ENCODE measurements at regions of chr16 and their contacts with region 1.

Region 1: DNA sequence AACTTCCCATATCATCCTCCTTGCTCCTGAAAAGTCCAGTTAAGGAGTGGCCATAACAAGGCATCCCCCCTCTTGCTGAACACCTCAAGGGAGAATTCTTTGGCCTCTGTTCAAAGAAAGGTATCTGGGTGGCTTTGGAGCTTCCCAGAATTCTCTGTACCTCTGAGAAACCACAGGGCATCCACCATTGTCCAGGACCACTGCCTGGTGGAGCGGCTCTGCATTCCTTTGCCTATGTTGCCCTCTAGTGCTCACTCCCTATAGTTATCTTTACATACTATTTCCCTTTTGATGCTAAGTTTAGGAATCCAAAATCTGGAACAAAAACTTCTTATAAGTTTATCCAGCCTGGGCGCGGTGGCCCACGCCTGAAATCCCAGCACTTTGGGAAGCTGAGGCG is 30.3 kb downstream of the CHD9NB start:
- DNase-seq: no peak
- ATAC-seq: peak; percentile 82
- H3K4me3 ChIP-seq: no peak overlapping the region
- H3K27ac ChIP-seq: no peak overlapping the region
- H3K4me1 ChIP-seq: no peaks in the 10 kb centered on the region
- H3K27me3 ChIP-seq: no peaks in the 10 kb centered on the region
- CTCF ChIP-seq: peak; percentile 46 to 63 (median 46); a peak in 4 of 6 replicates
- EP300 ChIP-seq: no peak
- POLR2A ChIP-seq: no peak
- RAD21 ChIP-seq: peak; percentile 78

Region 2: GRCh38 chr16:52068447-52069074 is 953.8 kb before region 1 on chr16:
- CTCF ChIA-PET with region 1: interaction called, 8 read pairs
- POLR2A ChIA-PET with region 1: no interaction called
- RAD21 ChIA-PET with region 1: no interaction called
- SMC1A ChIA-PET with region 1: interaction called, 5 read pairs
- in situ Hi-C with region 1: no loop called
- intact Hi-C with region 1: loop called (anchors 2 kb)
- DNase-seq: no peak
- ATAC-seq: peak; percentile 46
- H3K4me3 ChIP-seq: no peak overlapping the region
- H3K27ac ChIP-seq: no peak overlapping the region
- H3K4me1 ChIP-seq: no peaks in the 10 kb centered on the region
- H3K27me3 ChIP-seq: no peaks in the 10 kb centered on the region
- CTCF ChIP-seq: peak in 1 of 3 experiments; percentile 25; a peak in 1 of 6 replicates
- EP300 ChIP-seq: no peak
- POLR2A ChIP-seq: no peak
- RAD21 ChIP-seq: 0 out of 2 replicates have a peak, but pooled peaks have one; percentile 16

Region 3: GRCh38 chr16:52184336-52184735 is 838.0 kb before region 1 on chr16:
- CTCF ChIA-PET with region 1: no interaction called
- POLR2A ChIA-PET with region 1: no interaction called
- RAD21 ChIA-PET with region 1: no interaction called
- SMC1A ChIA-PET with region 1: no interaction called
- in situ Hi-C with region 1: loop called (anchors 10 kb)
- intact Hi-C with region 1: no loop called
- DNase-seq: no peak
- ATAC-seq: no peak
- H3K4me3 ChIP-seq: no peak overlapping the region
- H3K27ac ChIP-seq: no peak overlapping the region
- H3K4me1 ChIP-seq: no peaks in the 10 kb centered on the region
- H3K27me3 ChIP-seq: no peaks in the 10 kb centered on the region
- CTCF ChIP-seq: no peak
- EP300 ChIP-seq: no peak
- POLR2A ChIP-seq: no peak
- RAD21 ChIP-seq: no peak

Region 4: DNA sequence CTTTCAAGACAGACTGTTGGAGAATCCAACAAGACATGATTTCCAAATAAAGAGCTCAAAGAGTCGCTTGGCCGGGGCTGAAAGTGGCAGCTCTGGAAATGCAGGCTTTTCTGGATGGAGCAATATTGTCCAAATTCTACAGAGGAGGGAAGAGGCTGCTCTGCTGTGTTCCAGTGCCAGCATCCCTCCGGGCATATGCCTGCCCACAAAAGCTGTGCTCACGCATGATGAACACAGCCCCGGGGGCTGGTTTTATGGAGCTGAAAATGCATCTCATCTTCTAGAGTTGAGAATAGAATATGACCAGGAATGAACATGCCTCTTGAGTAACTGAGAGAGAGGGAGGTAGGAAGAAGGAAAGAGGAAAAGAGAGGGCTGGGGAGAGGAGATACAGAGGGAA is 400.7 kb before region 1 on chr16:
- CTCF ChIA-PET with region 1: no interaction called
- POLR2A ChIA-PET with region 1: no interaction called
- RAD21 ChIA-PET with region 1: no interaction called
- SMC1A ChIA-PET with region 1: no interaction called
- in situ Hi-C with region 1: no loop called
- intact Hi-C with region 1: no loop called
- DNase-seq: no peak
- ATAC-seq: no peak
- H3K4me3 ChIP-seq: no peak overlapping the region
- H3K27ac ChIP-seq: no peak overlapping the region
- H3K4me1 ChIP-seq: no peaks in the 10 kb centered on the region
- H3K27me3 ChIP-seq: no peaks in the 10 kb centered on the region
- CTCF ChIP-seq: no peak
- EP300 ChIP-seq: no peak
- POLR2A ChIP-seq: no peak
- RAD21 ChIP-seq: no peak

Region 5: DNA sequence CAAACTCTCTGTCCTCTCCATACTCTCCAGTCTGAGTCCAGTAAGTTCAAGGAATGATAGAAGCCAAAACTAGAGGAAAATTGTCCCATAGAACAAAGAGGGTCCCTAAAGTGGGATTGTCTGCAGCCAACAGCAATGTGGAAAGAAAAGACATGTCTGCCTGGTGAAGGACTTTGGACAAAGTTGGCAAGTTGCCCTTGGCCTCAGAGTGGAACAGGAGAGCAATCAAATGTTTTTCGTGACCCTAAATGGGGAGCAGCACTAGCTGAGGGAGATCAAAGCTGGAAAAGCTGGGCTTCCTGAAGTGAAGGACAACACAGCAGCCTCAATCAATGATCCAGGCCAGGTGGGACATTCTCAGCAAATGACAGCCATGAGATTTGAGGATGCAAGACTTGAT is 153.1 kb before region 1 on chr16:
- CTCF ChIA-PET with region 1: no interaction called
- POLR2A ChIA-PET with region 1: no interaction called
- RAD21 ChIA-PET with region 1: no interaction called
- SMC1A ChIA-PET with region 1: no interaction called
- in situ Hi-C with region 1: no loop called
- intact Hi-C with region 1: loop called (anchors 5 kb)
- DNase-seq: no peak
- ATAC-seq: no peak
- H3K4me3 ChIP-seq: no peak overlapping the region
- H3K27ac ChIP-seq: no peak overlapping the region
- H3K4me1 ChIP-seq: no peaks in the 10 kb centered on the region
- H3K27me3 ChIP-seq: no peaks in the 10 kb centered on the region
- CTCF ChIP-seq: no peak
- EP300 ChIP-seq: no peak
- POLR2A ChIP-seq: no peak
- RAD21 ChIP-seq: no peak

Region 6: DNA sequence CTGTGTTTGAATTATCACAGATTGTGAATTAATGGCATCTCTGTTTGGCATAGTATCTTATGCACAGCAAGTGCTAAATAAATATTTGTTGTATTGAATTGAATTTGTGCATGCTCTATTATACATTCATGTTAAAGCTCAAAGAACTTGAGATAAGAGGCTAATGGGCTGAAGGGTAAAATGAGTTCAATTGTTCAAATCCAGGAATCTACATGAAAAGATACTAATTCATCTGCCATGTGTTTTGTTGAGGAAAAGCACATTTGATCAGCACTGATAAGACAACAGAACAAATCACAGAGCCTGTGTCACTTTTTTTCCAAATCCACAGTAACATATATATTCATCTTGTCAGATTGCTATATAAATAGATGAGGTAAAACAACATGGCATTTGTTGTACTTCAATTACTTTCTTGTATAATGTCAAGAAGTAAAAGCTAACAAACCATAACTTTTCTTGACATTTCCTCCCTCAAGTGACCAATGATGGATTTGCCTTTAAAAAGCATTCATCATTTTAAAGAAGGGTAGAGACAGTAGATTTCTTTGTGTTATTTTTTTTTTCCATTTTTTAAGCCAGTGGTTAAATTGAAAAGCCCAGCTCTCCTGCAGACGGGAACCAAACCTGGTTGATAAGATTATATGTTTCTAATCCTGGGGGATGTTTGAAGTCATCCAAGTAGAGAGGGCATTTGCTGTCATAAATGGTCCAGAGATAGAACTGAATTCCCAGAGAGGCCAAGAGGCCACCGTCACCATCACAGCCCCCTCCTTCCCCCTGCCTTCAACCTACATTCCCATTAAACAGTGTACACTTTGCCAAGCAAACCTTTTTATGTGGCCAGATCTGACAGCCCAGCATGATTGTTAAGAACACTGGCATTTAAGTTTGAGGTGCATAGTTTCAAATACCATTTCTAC is 92.6 kb before region 1 on chr16:
- CTCF ChIA-PET with region 1: no interaction called
- POLR2A ChIA-PET with region 1: no interaction called
- RAD21 ChIA-PET with region 1: no interaction called
- SMC1A ChIA-PET with region 1: no interaction called
- in situ Hi-C with region 1: no loop called
- intact Hi-C with region 1: no loop called
- DNase-seq: no peak
- ATAC-seq: no peak
- H3K4me3 ChIP-seq: no peak overlapping the region
- H3K27ac ChIP-seq: no peak overlapping the region
- H3K4me1 ChIP-seq: no peaks in the 10 kb centered on the region
- H3K27me3 ChIP-seq: no peaks in the 10 kb centered on the region
- CTCF ChIP-seq: no peak
- EP300 ChIP-seq: no peak
- POLR2A ChIP-seq: no peak
- RAD21 ChIP-seq: no peak

Region 7: DNA sequence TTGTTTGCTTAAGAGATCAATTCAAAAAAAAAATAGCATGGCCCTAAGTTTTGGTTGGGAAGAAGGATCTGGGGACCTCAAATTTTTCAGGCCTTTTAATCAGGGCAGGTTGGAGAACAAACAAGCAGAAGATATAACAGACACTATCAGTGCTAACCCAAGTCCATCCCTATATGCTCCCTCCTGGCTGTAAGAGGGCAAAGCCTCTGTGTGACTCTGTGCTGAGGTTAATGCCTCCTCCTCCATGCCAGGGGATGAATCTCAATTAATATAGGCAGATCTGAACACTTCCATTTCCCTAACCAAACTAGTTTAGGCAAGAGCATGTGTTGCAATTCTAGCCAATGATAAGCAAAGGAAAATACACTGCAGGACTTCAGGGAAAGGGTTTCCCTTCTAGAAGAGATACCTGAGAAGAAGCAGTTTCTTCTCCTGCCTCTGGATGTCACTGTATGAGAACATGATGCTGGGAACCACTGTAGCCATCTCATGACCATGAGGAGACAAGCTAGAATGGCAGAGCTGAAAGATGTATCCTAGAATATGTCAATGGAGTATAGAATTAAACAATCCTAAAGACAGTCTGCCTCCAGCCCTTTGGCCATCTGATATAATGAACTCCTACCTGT is 45.7 kb before region 1 on chr16:
- CTCF ChIA-PET with region 1: interaction called, 3 read pairs
- POLR2A ChIA-PET with region 1: no interaction called
- RAD21 ChIA-PET with region 1: no interaction called
- SMC1A ChIA-PET with region 1: no interaction called
- in situ Hi-C with region 1: no loop called
- intact Hi-C with region 1: loop called (anchors 2 kb)
- DNase-seq: no peak
- ATAC-seq: peak; percentile 84
- H3K4me3 ChIP-seq: no peak overlapping the region
- H3K27ac ChIP-seq: no peak overlapping the region
- H3K4me1 ChIP-seq: no peaks in the 10 kb centered on the region
- H3K27me3 ChIP-seq: no peaks in the 10 kb centered on the region
- CTCF ChIP-seq: peak; percentile 38 to 55 (median 55); a peak in 5 of 6 replicates
- EP300 ChIP-seq: no peak
- POLR2A ChIP-seq: no peak
- RAD21 ChIP-seq: peak; percentile 69

Region 8: GRCh38 chr16:53034306-53034705 is 11.9 kb after region 1 on chr16:
- CTCF ChIA-PET with region 1: no interaction called
- POLR2A ChIA-PET with region 1: no interaction called
- RAD21 ChIA-PET with region 1: no interaction called
- SMC1A ChIA-PET with region 1: no interaction called
- in situ Hi-C with region 1: no loop called
- intact Hi-C with region 1: no loop called
- DNase-seq: no peak
- ATAC-seq: no peak
- H3K4me3 ChIP-seq: no peak overlapping the region
- H3K27ac ChIP-seq: no peak overlapping the region
- H3K4me1 ChIP-seq: no peaks in the 10 kb centered on the region
- H3K27me3 ChIP-seq: no peaks in the 10 kb centered on the region
- CTCF ChIP-seq: no peak
- EP300 ChIP-seq: no peak
- POLR2A ChIP-seq: no peak
- RAD21 ChIP-seq: no peak

Region 9: GRCh38 chr16:53583401-53583800 is 561.0 kb after region 1 on chr16:
- CTCF ChIA-PET with region 1: no interaction called
- POLR2A ChIA-PET with region 1: no interaction called
- RAD21 ChIA-PET with region 1: no interaction called
- SMC1A ChIA-PET with region 1: no interaction called
- in situ Hi-C with region 1: no loop called
- intact Hi-C with region 1: no loop called
- DNase-seq: no peak
- ATAC-seq: no peak
- H3K4me3 ChIP-seq: no peak overlapping the region
- H3K27ac ChIP-seq: no peak overlapping the region
- H3K4me1 ChIP-seq: no peaks in the 10 kb centered on the region
- H3K27me3 ChIP-seq: no peaks in the 10 kb centered on the region
- CTCF ChIP-seq: no peak
- EP300 ChIP-seq: no peak
- POLR2A ChIP-seq: no peak
- RAD21 ChIP-seq: no peak